H1 (cell line): ENCODE measurements at regions of chr6 and their contacts with region 1.

Region 1: DNA sequence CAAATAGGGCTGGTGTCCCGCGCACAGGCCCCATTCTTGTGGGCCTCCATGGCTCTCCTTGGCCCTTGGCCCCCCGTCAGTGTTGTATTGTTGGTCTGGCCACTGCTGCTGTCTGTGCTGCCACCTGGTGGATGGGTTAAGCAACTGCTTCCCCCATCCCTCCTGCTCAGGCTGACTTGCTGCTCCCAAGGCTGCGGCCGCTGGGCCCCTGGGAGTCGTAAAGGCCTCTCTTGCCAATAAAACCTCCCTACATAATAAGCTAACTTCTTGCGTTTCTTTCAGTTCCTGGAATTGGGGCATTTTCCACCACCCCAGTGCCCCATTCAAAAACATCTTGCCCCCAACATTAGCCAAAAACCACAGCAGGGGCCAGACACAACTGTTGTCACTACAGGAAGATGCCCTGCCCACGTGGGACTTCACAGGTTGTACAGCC is 27.1 kb downstream of the CD83 start:
- DNase-seq: peak; percentile 76 to 92
- H3K4me3 ChIP-seq: no peak overlapping the region
- H3K27ac ChIP-seq: no peak overlapping the region
- H3K4me1 ChIP-seq: no peaks in the 10 kb centered on the region; a peak in 2 of 7 replicates
- H3K27me3 ChIP-seq: no peaks in the 10 kb centered on the region; a peak in 1 of 7 replicates
- CTCF ChIP-seq: peak; percentile 88 to 98 (median 97)
- EP300 ChIP-seq: no peak
- POLR2A ChIP-seq: no peak
- RAD21 ChIP-seq: peak; percentile 90 to 93

Region 2: GRCh38 chr6:13863674-13864155 is 281.0 kb before region 1 on chr6:
- CTCF ChIA-PET with region 1: no interaction called
- POLR2A ChIA-PET with region 1: no interaction called
- DNase-seq: no peak
- H3K4me3 ChIP-seq: no peak overlapping the region
- H3K27ac ChIP-seq: no peak overlapping the region
- H3K4me1 ChIP-seq: no peaks in the 10 kb centered on the region
- H3K27me3 ChIP-seq: no peaks in the 10 kb centered on the region
- CTCF ChIP-seq: no peak
- EP300 ChIP-seq: no peak
- POLR2A ChIP-seq: no peak
- RAD21 ChIP-seq: no peak

Region 3: DNA sequence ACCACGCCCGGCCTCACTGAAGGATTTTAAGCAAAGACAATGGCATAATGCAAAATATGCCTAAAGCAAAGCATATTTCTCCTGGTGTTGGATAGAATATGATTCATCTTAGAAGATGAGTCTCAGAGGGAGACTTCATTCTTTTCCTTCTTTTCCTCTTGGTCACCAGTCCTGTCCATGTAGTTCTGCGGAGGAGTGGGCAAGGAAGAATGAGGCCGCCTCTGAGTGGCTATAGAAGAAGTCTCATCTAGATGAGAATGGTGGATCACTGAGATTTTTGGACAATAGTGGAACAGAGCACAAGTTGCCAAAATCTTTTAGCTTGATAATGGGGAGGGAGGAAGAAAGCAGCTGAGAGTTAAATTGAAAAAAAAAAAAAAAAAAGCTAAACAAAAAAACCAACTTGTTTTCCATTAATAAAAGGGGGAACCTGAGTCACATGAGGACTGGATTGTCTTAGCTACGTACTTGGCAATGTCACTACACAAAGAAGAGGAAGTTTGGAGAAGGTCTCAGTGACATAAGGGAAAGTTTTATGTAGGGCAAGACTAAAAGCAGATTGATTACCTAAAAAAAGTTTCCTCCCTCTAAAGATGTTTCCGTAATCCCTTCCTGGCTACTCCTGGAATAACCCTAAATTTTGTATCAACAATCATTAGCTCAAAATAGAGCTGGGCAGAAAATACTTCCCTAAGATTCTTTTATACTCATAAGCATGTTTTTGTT is 21.1 kb before region 1 on chr6:
- CTCF ChIA-PET with region 1: interaction called, 49 read pairs
- POLR2A ChIA-PET with region 1: no interaction called
- DNase-seq: no peak
- H3K4me3 ChIP-seq: no peak overlapping the region
- H3K27ac ChIP-seq: no peak overlapping the region
- H3K4me1 ChIP-seq: peaks cover 0 to 9% (median 5%) of the 10 kb centered on the region in 4 experiments; a peak in 4 of 7 replicates
- H3K27me3 ChIP-seq: peaks cover 0 to 2% (median under 1%) of the 10 kb centered on the region in 4 experiments; a peak in 1 of 7 replicates
- CTCF ChIP-seq: no peak
- EP300 ChIP-seq: no peak
- POLR2A ChIP-seq: no peak
- RAD21 ChIP-seq: no peak

Region 4: DNA sequence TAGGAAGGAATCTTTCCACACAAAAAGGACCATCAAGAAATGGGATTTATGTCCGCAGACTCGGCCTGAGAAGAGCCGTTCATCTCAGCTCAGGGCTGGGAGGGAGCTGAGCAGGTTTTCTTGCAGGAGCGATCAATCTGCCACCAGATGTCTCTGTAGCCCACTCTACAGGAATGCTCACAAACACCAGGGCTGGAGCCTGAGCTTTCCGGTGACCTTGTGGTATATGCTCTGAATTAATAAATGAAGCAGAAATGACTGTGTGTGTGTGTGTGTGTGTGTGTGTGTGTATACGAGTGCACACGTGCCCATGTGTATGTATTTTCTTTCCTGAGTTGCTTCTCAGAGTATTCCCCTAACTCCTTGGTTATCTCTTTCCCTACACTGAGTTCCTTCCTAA is 15.1 kb before region 1 on chr6:
- CTCF ChIA-PET with region 1: interaction called, 49 read pairs
- POLR2A ChIA-PET with region 1: no interaction called
- DNase-seq: peak in 1 of 2 experiments; percentile 27
- H3K4me3 ChIP-seq: no peak overlapping the region
- H3K27ac ChIP-seq: no peak overlapping the region
- H3K4me1 ChIP-seq: peaks cover 4 to 19% (median 16%) of the 10 kb centered on the region in 4 experiments
- H3K27me3 ChIP-seq: no peaks in the 10 kb centered on the region; a peak in 1 of 7 replicates
- CTCF ChIP-seq: peak; percentile 58 to 75 (median 66)
- EP300 ChIP-seq: no peak
- POLR2A ChIP-seq: no peak
- RAD21 ChIP-seq: peak; percentile 85 to 88